ENCODE measurements at regions of chr15 and their contacts with region 1.

Region 1: DNA sequence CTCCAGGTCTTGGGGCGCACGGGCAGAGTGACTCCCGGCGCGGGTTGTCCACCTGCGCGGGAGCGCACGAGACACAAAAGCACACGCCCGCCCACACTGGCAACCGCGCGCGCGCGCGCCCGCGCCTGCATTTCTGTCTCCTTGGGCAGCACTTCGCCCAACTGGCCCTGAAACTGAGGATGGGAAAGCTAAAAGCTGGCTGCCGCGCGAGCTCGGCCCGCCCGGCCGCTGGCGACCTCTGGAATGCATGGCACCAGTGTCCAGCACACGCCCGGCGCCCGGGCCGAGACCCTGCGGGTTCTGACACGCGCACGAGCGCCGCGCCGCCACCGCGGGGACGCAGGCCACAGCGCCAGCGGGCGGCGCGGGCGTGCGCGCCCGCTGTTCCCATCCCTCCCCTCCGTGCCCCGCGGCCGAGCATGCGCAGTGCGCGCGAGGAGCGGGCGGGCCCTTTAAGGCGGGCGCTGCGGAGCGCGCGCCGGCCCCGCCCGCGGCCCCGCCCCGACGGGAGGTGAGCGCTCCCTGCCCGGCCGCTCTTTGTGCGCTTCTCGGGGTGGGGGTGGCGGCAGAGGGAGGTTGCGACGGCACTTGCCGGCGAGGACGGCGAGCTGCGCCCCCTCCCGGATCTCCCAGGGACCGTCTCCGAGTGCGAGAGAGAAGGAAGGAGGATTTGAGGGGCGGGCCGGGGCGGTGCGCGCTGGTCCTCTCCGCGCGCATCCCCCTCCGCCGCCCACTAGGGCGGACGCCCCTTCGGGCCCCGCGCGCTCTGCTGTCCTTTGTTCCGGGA is 1.0 kb upstream of the MEX3B start:
- DNase-seq: peak; percentile 78 to 98 (median 86)

Region 2: GRCh38 chr15:82072926-82073537 is 26.2 kb after region 1 on chr15:
- intact Hi-C with region 1: no loop called
- DNase-seq: no peak

Region 3: DNA sequence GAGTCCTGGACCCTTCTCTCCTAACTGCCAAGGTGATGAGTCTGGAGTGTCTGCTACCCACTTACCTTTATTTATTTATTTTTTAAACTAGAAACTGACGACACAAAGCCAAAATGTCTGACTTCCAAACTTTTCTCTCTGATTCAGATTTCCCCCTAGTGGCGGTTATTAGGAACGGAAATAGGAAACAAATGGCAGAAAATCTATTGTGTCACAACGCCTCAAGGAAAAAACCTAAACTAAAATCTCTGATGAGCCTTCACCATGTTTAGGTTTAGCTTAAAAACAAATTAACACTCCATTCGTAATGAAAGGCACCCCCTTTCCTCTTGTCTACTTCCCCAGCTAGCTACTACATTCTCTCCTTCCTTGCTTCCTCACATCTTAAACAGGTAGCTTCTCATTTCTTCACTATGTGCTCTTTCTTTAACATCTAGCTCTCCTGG is 93.0 kb after region 1 on chr15:
- intact Hi-C with region 1: loop called (anchors 5 kb)
- DNase-seq: no peak